Naive thymus-derived CD4-positive, alpha-beta T cell (primary cell): ENCODE measurements at regions of chr10 and their contacts with region 1.

Region 1: DNA sequence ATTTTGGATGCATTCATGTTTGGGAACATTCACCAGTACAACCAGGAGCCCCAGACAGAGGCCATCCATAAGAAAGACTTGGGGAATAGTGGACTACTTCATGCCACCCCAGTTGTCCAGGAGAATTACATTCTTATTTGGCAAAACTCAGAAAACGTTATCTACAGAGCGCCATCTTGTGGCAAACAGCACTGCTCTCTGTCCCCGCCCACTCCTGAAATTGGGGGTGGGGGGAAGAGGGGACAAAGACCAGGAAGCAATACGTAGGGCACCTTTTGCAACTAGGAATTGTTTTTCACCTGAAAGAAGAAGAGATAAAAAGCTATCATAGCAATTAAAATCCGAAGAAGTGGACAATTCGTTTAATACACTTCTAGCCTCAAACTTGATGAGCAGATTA is 134.6 kb upstream of the MGMT start:
- DNase-seq: peak in 4 of 9 donors; percentile 8 to 29 (median 19)
- ATAC-seq: no peak
- H3K4me3 ChIP-seq: no peak overlapping the region
- H3K4me3 Mint-ChIP-seq: peak overlapping the region in 2 of 10 donors; percentile 37 to 44
- H3K27ac ChIP-seq: no peak overlapping the region
- H3K27ac Mint-ChIP-seq: peak overlapping the region in 1 of 9 donors; percentile 0
- H3K4me1 ChIP-seq: no peaks in the 10 kb centered on the region
- H3K4me1 Mint-ChIP-seq: peaks cover 0 to 9% (median 4%) of the 10 kb centered on the region in 7 donors
- H3K27me3 ChIP-seq: no peaks in the 10 kb centered on the region
- H3K27me3 Mint-ChIP-seq: peaks cover 8 to 31% (median 12%) of the 10 kb centered on the region in 5 donors

Region 2: GRCh38 chr10:129101232-129101980 is 231.1 kb before region 1 on chr10:
- CTCF ChIA-PET with region 1: no interaction called
- POLR2A ChIA-PET with region 1: no interaction called
- intact Hi-C with region 1: loop called in 1 of 2 experiments (anchors 5 kb)
- DNase-seq: peak in 4 of 9 donors; percentile 10 to 35 (median 20)
- ATAC-seq: no peak
- H3K4me3 ChIP-seq: no peak overlapping the region
- H3K4me3 Mint-ChIP-seq: peak overlapping the region in 7 of 10 donors; percentile 8 to 58 (median 30)
- H3K27ac ChIP-seq: no peak overlapping the region
- H3K27ac Mint-ChIP-seq: peak overlapping the region in 7 of 9 donors; percentile 7 to 88 (median 67)
- H3K4me1 ChIP-seq: peaks cover 0 to 39% of the 10 kb centered on the region in 2 donors
- H3K4me1 Mint-ChIP-seq: peaks cover 6 to 66% (median 55%) of the 10 kb centered on the region in 7 donors
- H3K27me3 ChIP-seq: no peaks in the 10 kb centered on the region
- H3K27me3 Mint-ChIP-seq: no peaks in the 10 kb centered on the region

Region 3: DNA sequence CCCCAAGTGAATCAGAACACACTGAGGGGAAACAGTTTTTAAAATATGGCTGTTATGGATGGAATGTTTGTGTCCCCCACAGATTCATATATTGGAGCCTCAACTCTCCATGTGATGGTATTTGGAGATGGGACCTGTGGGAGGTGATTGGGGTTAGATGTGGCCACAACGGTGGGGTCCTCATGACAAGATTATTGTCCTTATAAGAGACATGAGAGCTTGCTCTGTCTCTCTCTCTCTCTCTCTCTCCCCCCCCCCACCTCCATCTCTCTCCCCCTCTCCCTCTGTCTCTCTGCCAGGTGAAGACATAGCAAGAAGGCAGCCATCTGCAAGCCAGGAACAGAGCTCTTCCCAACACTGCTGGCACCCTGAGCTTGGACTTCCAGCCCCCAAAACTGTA is 181.2 kb before region 1 on chr10:
- CTCF ChIA-PET with region 1: no interaction called
- POLR2A ChIA-PET with region 1: no interaction called
- intact Hi-C with region 1: loop called in 1 of 2 experiments (anchors 5 kb)
- DNase-seq: no peak
- ATAC-seq: no peak
- H3K4me3 ChIP-seq: no peak overlapping the region
- H3K4me3 Mint-ChIP-seq: no peak overlapping the region
- H3K27ac ChIP-seq: no peak overlapping the region
- H3K27ac Mint-ChIP-seq: no peak overlapping the region
- H3K4me1 ChIP-seq: no peaks in the 10 kb centered on the region
- H3K4me1 Mint-ChIP-seq: no peaks in the 10 kb centered on the region
- H3K27me3 ChIP-seq: no peaks in the 10 kb centered on the region
- H3K27me3 Mint-ChIP-seq: peaks cover 3 to 13% (median 5%) of the 10 kb centered on the region in 5 donors

Region 4: GRCh38 chr10:129293991-129294700 is 38.3 kb before region 1 on chr10:
- CTCF ChIA-PET with region 1: no interaction called
- POLR2A ChIA-PET with region 1: no interaction called
- intact Hi-C with region 1: no loop called
- DNase-seq: no peak
- ATAC-seq: no peak
- H3K4me3 ChIP-seq: no peak overlapping the region
- H3K4me3 Mint-ChIP-seq: no peak overlapping the region
- H3K27ac ChIP-seq: no peak overlapping the region
- H3K27ac Mint-ChIP-seq: no peak overlapping the region
- H3K4me1 ChIP-seq: no peaks in the 10 kb centered on the region
- H3K4me1 Mint-ChIP-seq: no peaks in the 10 kb centered on the region
- H3K27me3 ChIP-seq: no peaks in the 10 kb centered on the region
- H3K27me3 Mint-ChIP-seq: peaks cover 0 to 32% (median 10%) of the 10 kb centered on the region in 5 donors

Region 5: DNA sequence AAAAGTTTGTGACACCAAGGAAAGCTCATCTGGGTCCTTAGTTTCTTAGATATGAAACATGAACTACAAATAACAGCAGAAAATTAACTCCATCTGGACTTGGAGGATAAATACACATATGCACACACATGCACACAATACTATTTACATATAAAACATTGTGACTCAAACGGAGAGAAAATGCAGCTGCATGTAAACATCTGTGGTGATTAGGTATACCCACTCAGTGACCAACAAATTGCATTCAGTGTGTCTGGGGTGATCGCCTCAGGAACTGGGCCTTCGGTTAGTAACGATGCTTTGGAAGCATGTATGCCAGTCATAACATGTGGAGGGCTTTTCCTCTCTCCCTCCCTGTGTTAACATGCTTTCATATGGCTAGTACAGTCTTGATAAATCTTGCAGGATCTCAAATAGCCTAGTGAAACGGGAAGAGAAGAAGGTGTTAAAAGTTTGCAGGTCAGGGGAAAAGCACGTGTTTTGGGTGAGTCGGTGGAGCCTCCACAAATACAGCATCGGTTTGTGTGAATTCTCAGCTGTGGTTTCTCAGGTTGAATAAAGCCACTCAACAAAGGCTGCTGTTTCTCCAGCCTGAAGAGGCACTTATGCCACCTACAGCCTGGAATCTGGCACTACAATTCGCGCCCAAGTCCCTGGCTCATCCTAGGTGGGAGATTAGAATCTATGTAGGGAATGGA is 795.0 kb after region 1 on chr10:
- CTCF ChIA-PET with region 1: no interaction called
- POLR2A ChIA-PET with region 1: no interaction called
- intact Hi-C with region 1: loop called in 1 of 2 experiments (anchors 5 kb)
- DNase-seq: peak in 8 of 9 donors; percentile 24 to 60 (median 46)
- ATAC-seq: peak; percentile 92
- H3K4me3 ChIP-seq: no peak overlapping the region
- H3K4me3 Mint-ChIP-seq: peak overlapping the region in 2 of 10 donors; percentile 19 to 22
- H3K27ac ChIP-seq: no peak overlapping the region
- H3K27ac Mint-ChIP-seq: no peak overlapping the region
- H3K4me1 ChIP-seq: no peaks in the 10 kb centered on the region
- H3K4me1 Mint-ChIP-seq: peaks cover 0 to 10% (median 7%) of the 10 kb centered on the region in 7 donors
- H3K27me3 ChIP-seq: no peaks in the 10 kb centered on the region
- H3K27me3 Mint-ChIP-seq: peaks cover 9 to 53% (median 17%) of the 10 kb centered on the region in 5 donors